PC-9 (cell line): ENCODE measurements at regions of chr1 and their contacts with region 1.

Region 1: DNA sequence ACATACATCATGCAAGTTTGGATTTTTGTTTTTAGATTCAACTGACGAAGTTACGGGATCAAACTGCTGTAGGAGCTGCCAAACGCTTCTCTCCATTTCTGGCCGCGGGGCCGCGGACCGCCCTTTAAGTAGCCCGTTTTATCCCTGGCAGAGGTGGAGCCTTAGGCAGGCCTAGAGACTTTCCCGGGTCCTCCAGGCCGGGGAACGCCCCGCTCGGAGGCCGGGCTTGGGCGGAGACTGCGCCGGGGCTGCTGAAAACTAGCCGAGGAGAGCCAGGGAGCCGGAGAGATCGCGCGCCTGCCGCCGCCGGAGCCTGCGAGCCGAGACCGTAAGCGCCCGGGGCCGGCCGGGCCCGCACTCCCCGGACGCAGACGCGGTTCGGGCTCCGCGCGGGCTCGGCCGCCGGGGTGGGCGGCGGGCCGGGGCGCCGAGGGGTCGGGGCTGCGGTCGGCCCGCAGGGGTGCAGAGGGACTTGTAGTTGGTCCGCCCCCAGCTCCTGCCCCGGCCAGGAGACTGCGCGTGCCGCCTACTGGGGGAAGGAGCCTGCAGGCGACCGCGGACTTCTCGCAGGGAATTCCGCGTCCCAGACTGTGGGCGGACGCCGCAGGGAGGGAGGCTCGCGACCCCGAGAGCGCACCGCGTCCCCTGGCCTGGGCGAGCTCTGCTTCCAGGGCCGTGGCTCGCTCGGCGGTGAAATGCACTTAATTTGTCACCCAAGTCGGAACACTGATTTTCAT is at the start of gene EPHX1:
- DNase-seq: peak; percentile 76 to 95
- H3K4me3 ChIP-seq: peak within 1 kb of the TSS; percentile 92
- H3K27ac ChIP-seq: peak within 1 kb of the TSS; percentile 75
- H3K4me1 ChIP-seq: peaks cover 44% of the 10 kb centered on the region
- H3K27me3 ChIP-seq: no peaks in the 10 kb centered on the region
- CTCF ChIP-seq: no peak; the same call in 1 of the 2 replicates
- total RNA-seq, gene EPHX1: 288 and 313 TPM in 2 replicates

Region 2: GRCh38 chr1:225480825-225481434 is 329.1 kb before region 1 on chr1:
- CTCF ChIA-PET with region 1: interaction called, 4 read pairs
- POLR2A ChIA-PET with region 1: no interaction called
- intact Hi-C with region 1: loop called (anchors 1 kb)
- DNase-seq: peak; percentile 59 to 81
- H3K4me3 ChIP-seq: no peak overlapping the region
- H3K27ac ChIP-seq: no peak overlapping the region
- H3K4me1 ChIP-seq: no peaks in the 10 kb centered on the region
- H3K27me3 ChIP-seq: no peaks in the 10 kb centered on the region
- CTCF ChIP-seq: peak; percentile 94

Region 3: GRCh38 chr1:225580238-225581099 is 229.5 kb before region 1 on chr1:
- CTCF ChIA-PET with region 1: interaction called, 16 read pairs
- POLR2A ChIA-PET with region 1: no interaction called
- intact Hi-C with region 1: no loop called
- DNase-seq: no peak
- H3K4me3 ChIP-seq: no peak overlapping the region
- H3K27ac ChIP-seq: no peak overlapping the region
- H3K4me1 ChIP-seq: no peaks in the 10 kb centered on the region
- H3K27me3 ChIP-seq: no peaks in the 10 kb centered on the region
- CTCF ChIP-seq: no peak

Region 4: GRCh38 chr1:225700164-225700740 is 109.8 kb before region 1 on chr1:
- CTCF ChIA-PET with region 1: interaction called, 3 read pairs
- POLR2A ChIA-PET with region 1: interaction called, 6 read pairs
- intact Hi-C with region 1: loop called (anchors 1 kb)
- DNase-seq: peak; percentile 75 to 99
- H3K4me3 ChIP-seq: peak overlapping the region; percentile 30; the same call in 1 of the 2 replicates
- H3K27ac ChIP-seq: peak overlapping the region; percentile 71
- H3K4me1 ChIP-seq: peaks cover 23% of the 10 kb centered on the region
- H3K27me3 ChIP-seq: no peaks in the 10 kb centered on the region
- CTCF ChIP-seq: no peak

Region 5: DNA sequence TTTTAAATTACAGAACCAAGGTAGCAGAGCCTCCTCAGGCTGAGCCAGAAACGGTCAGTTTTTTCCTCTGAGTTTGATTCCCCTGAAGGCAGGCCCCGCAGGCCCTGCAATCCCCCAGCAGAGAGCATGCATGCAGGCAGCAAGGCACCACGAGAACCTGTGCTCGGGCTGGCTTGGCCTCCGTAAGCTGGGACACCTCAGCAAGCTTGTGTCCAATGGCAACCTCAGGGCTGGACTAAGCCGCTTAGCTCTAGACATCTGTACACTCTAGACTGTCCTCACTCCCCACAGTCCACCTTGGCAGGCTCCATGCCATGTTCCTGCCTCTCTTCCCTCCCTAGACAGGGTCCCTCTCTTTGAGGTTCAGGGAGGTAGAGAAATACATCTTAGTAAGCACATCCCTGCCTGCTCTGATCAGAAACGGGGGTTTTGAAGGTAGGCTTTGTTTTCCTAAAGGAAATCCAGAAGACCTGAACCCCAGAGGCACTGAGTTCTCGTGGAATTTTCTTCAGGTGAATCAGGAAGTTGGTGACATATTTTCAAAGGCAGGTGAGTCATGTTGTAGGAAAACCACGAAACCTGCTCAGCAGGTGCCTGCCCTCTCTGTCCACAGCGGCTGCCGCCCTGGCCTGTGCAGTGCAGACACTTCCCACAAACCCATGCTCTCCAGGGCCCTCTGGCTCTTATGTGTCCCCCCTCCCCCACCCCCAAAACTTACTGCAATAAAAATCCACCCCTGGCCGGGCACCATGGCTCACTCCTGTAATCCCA is 65.2 kb after region 1 on chr1:
- CTCF ChIA-PET with region 1: no interaction called
- POLR2A ChIA-PET with region 1: interaction called, 6 read pairs
- intact Hi-C with region 1: loop called (anchors 2 kb)
- DNase-seq: peak; percentile 92 to 96
- H3K4me3 ChIP-seq: peak overlapping the region; percentile 30; the same call in 1 of the 2 replicates
- H3K27ac ChIP-seq: peak overlapping the region; percentile 91
- H3K4me1 ChIP-seq: peaks cover 91% of the 10 kb centered on the region
- H3K27me3 ChIP-seq: no peaks in the 10 kb centered on the region
- CTCF ChIP-seq: no peak

Region 6: GRCh38 chr1:225987491-225988316 is 177.7 kb after region 1 on chr1:
- CTCF ChIA-PET with region 1: interaction called, 13 read pairs
- POLR2A ChIA-PET with region 1: no interaction called
- intact Hi-C with region 1: no loop called
- DNase-seq: peak in 1 of 2 experiments; percentile 41
- H3K4me3 ChIP-seq: no peak overlapping the region
- H3K27ac ChIP-seq: no peak overlapping the region
- H3K4me1 ChIP-seq: no peaks in the 10 kb centered on the region
- H3K27me3 ChIP-seq: no peaks in the 10 kb centered on the region
- CTCF ChIP-seq: peak; percentile 84